Caco-2 (cell line): ENCODE measurements at regions of chr19 and their contacts with region 1.

Region 1: DNA sequence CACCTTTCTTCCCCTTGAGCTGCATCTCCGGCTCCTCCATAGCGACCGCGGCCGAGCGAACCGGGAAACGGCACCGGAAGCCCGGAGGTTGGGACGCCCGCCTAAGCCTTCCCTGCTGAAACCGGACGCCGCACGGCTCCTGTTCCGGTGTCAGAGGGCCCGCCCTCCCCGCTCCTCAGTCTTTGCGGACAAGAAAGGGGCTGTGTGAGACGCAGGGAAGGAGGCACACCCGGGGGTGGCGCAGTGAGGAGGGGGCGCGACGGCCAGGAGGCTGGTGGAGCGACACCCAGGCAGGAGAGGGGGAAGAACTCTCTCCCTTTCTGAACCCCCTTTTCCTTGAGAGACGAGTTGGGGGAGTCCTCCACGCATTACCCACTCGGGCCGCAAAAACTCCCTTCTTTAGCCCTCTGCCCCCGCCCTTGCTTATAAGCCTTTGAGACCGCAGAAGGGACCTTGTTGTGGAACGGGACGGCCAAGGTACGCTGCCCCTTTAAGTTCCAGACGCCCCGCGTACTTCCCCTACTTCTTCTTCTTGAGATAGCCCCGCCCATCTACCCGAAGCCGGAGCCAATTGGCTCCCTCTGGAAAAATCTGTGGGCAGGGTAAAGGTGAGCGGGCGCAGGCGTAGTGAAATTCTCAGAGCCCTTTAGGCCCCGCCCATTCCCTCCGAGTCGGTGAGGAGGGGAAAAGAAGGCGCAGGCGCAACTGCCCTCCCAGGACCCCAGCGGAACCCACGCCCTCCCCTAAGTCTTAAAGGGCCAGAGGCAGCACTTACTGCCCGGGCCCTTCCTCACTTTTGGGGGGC is at the starts of genes BORCS8 and RFXANK:
- DNase-seq: peak; percentile 98
- H3K4me3 ChIP-seq: peak within 1 kb of the TSS; percentile 84
- H3K4me3 Mint-ChIP-seq: peak within 1 kb of the TSS; percentile 97
- H3K27ac Mint-ChIP-seq: peak within 1 kb of the TSS; percentile 92
- H3K4me1 ChIP-seq: no peaks in the 10 kb centered on the region
- H3K4me1 Mint-ChIP-seq: no peaks in the 10 kb centered on the region
- H3K27me3 ChIP-seq: no peaks in the 10 kb centered on the region
- H3K27me3 Mint-ChIP-seq: no peaks in the 10 kb centered on the region
- CTCF ChIP-seq: no peak
- total RNA-seq, gene BORCS8: 36.2 and 37.7 TPM in 2 replicates
- total RNA-seq, gene RFXANK: 59.8 and 73.4 TPM in 2 replicates

Region 2: GRCh38 chr19:19155495-19156219 is 36.6 kb before region 1 on chr19:
- CTCF ChIA-PET with region 1: no interaction called
- POLR2A ChIA-PET with region 1: no interaction called
- intact Hi-C with region 1: no loop called
- DNase-seq: no peak
- H3K4me3 ChIP-seq: no peak overlapping the region
- H3K4me3 Mint-ChIP-seq: no peak overlapping the region
- H3K27ac Mint-ChIP-seq: no peak overlapping the region
- H3K4me1 ChIP-seq: no peaks in the 10 kb centered on the region
- H3K4me1 Mint-ChIP-seq: no peaks in the 10 kb centered on the region
- H3K27me3 ChIP-seq: no peaks in the 10 kb centered on the region
- H3K27me3 Mint-ChIP-seq: no peaks in the 10 kb centered on the region
- CTCF ChIP-seq: no peak

Region 3: GRCh38 chr19:19203012-19203856 is 11.0 kb after region 1 on chr19 and contains the start of gene NR2C2AP:
- CTCF ChIA-PET with region 1: no interaction called
- POLR2A ChIA-PET with region 1: interaction called, 18 read pairs
- intact Hi-C with region 1: loop called (anchors 1 kb)
- DNase-seq: peak; percentile 90 to 92
- H3K4me3 ChIP-seq: peak within 1 kb of the TSS; percentile 67
- H3K4me3 Mint-ChIP-seq: peak within 1 kb of the TSS; percentile 83
- H3K27ac Mint-ChIP-seq: peak within 1 kb of the TSS; percentile 87
- H3K4me1 ChIP-seq: peaks cover 4% of the 10 kb centered on the region; the same call in 1 of the 2 replicates
- H3K4me1 Mint-ChIP-seq: no peaks in the 10 kb centered on the region
- H3K27me3 ChIP-seq: no peaks in the 10 kb centered on the region
- H3K27me3 Mint-ChIP-seq: peaks cover 3% of the 10 kb centered on the region
- CTCF ChIP-seq: no peak
- total RNA-seq, gene NR2C2AP: 25.2 and 25.7 TPM in 2 replicates

Region 4: GRCh38 chr19:19320362-19321142 is 128.3 kb after region 1 on chr19 and contains the starts of genes MAU2 and SUGP1:
- CTCF ChIA-PET with region 1: no interaction called
- POLR2A ChIA-PET with region 1: no interaction called
- intact Hi-C with region 1: loop called (anchors 2 kb)
- DNase-seq: peak; percentile 91 to 92
- H3K4me3 ChIP-seq: peak within 1 kb of the TSS; percentile 100
- H3K4me3 Mint-ChIP-seq: peak within 1 kb of the TSS; percentile 77
- H3K27ac Mint-ChIP-seq: peak within 1 kb of the TSS; percentile 91
- H3K4me1 ChIP-seq: no peaks in the 10 kb centered on the region; the same call in 1 of the 2 replicates
- H3K4me1 Mint-ChIP-seq: peaks cover under 1% of the 10 kb centered on the region
- H3K27me3 ChIP-seq: no peaks in the 10 kb centered on the region
- H3K27me3 Mint-ChIP-seq: no peaks in the 10 kb centered on the region
- CTCF ChIP-seq: no peak
- total RNA-seq, gene MAU2: 51.3 and 62.6 TPM in 2 replicates
- total RNA-seq, gene SUGP1: 51.2 and 58.4 TPM in 2 replicates

Region 5: GRCh38 chr19:19348266-19348665 is 156.0 kb after region 1 on chr19:
- CTCF ChIA-PET with region 1: no interaction called
- POLR2A ChIA-PET with region 1: no interaction called
- intact Hi-C with region 1: no loop called
- DNase-seq: no peak
- H3K4me3 ChIP-seq: no peak overlapping the region
- H3K4me3 Mint-ChIP-seq: no peak overlapping the region
- H3K27ac Mint-ChIP-seq: no peak overlapping the region
- H3K4me1 ChIP-seq: no peaks in the 10 kb centered on the region
- H3K4me1 Mint-ChIP-seq: no peaks in the 10 kb centered on the region
- H3K27me3 ChIP-seq: no peaks in the 10 kb centered on the region
- H3K27me3 Mint-ChIP-seq: no peaks in the 10 kb centered on the region
- CTCF ChIP-seq: no peak

Region 6: DNA sequence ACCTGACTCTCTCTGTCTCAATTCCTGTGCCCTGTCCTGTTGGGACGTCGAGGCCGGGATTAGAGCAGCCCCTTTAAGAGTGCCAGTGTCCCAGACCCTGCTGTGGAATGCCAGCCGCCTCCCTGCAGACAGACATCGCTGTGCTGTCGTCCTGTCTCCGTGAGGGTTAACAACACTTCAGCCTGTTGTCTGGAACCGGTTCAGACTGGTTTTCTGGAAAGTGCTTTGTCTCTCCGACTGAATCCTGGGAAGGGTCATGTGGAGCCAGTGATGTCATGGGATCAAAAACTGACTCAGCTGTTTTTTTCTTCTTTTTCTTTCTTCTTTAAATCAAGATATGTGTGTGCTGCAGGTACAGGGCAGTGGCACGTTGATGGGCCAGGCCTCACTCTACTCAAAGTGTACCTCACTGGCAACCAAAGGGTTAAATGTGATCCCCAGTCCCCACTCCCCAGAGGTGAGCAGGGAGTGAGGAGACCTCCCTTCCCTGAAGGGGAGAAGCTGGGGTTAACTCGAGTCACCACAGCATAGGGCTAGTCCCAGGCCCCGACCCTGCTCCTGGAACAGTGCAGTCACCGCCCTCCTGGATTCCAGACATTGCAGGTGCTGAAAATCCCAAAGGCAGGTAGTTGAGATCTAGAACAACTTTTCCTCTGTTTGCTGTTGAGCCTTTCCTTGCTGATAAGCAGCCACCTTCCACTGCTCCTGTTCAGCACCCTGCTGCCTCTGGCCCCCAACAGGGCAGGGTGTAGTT is 272.2 kb after region 1 on chr19:
- CTCF ChIA-PET with region 1: no interaction called
- POLR2A ChIA-PET with region 1: no interaction called
- intact Hi-C with region 1: loop called (anchors 1 kb)
- DNase-seq: peak; percentile 76 to 77
- H3K4me3 ChIP-seq: no peak overlapping the region
- H3K4me3 Mint-ChIP-seq: peak overlapping the region; percentile 67
- H3K27ac Mint-ChIP-seq: peak overlapping the region; percentile 96
- H3K4me1 ChIP-seq: peaks cover 42% of the 10 kb centered on the region
- H3K4me1 Mint-ChIP-seq: peaks cover 49% of the 10 kb centered on the region
- H3K27me3 ChIP-seq: no peaks in the 10 kb centered on the region
- H3K27me3 Mint-ChIP-seq: no peaks in the 10 kb centered on the region
- CTCF ChIP-seq: no peak